Heart right ventricle (tissue), 16 donors: ENCODE measurements at regions of chr4 and their contacts with region 1.

Region 1: DNA sequence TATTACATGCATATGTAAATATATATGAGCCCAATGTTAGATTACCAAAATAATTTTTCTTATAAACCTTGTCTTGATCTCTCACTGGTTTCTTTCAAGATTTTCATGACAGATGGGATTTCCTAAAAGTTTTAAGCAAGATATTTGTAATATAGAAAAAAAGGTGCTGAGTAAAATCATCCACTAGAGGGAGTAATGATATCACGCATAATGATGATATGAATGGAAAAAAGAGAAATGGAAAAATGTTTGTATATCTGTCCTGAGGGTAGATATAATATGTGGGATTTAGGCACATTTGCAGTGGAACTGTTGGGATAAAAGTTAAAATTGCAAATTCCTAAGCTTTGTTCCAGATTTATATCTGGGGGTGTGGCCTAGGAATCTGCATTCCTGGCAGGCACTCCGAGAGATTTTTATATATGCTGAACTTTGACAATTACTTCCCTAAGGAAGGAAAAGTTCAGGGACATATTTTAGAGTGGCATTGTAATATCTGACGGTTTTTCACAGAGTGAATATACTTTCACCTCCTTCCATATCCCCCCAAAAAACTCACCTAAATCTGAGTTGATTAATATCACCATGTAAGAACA is 60.5 kb downstream of the TMA16 start:
- DNase-seq: no peak
- ATAC-seq: no peak
- H3K4me3 ChIP-seq: no peak overlapping the region
- H3K27ac ChIP-seq: no peak overlapping the region
- H3K4me1 ChIP-seq: peaks cover 0 to 50% (median 13%) of the 10 kb centered on the region in 9 donors
- H3K27me3 ChIP-seq: peaks cover 0 to 4% (median 0%) of the 10 kb centered on the region in 7 donors
- CTCF ChIP-seq: peak; percentile 23 to 80 (median 63)

Region 2: GRCh38 chr4:163415668-163416067 is 139.3 kb before region 1 on chr4:
- intact Hi-C with region 1: no loop called
- DNase-seq: no peak
- ATAC-seq: no peak
- H3K4me3 ChIP-seq: no peak overlapping the region
- H3K27ac ChIP-seq: no peak overlapping the region
- H3K4me1 ChIP-seq: no peaks in the 10 kb centered on the region
- H3K27me3 ChIP-seq: peaks cover 0 to 5% (median 0%) of the 10 kb centered on the region in 7 donors
- CTCF ChIP-seq: no peak

Region 3: DNA sequence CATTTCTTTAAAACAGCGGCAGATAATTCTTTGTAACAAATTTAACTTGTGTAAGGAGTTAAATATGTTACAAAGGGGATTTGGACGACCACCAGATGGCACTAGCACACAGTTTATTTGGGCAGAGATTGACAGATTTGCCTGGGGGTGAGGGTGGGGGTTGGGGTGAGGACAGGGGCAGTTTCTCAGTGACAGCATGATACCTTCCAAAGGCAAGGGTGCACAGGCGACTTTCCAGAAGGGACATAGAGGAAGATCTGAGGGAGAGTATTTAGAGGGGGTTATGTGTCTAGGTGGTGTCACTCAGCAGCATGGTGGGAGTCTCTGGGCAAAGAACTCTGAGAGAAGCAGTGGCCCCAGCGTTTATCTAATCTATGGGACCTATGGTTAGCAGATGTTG is 70.1 kb before region 1 on chr4:
- intact Hi-C with region 1: loop called in 2 of 10 experiments (anchors 2 kb)
- DNase-seq: peak in 1 of 2 donors; percentile 29
- ATAC-seq: peak in 1 of 8 donors; percentile 41
- H3K4me3 ChIP-seq: no peak overlapping the region
- H3K27ac ChIP-seq: no peak overlapping the region
- H3K4me1 ChIP-seq: peaks cover 0 to 13% (median 0%) of the 10 kb centered on the region in 9 donors
- H3K27me3 ChIP-seq: peaks cover 0 to 6% (median 0%) of the 10 kb centered on the region in 7 donors
- CTCF ChIP-seq: peak in 8 of 9 donors; percentile 31 to 68 (median 56)

Region 4: DNA sequence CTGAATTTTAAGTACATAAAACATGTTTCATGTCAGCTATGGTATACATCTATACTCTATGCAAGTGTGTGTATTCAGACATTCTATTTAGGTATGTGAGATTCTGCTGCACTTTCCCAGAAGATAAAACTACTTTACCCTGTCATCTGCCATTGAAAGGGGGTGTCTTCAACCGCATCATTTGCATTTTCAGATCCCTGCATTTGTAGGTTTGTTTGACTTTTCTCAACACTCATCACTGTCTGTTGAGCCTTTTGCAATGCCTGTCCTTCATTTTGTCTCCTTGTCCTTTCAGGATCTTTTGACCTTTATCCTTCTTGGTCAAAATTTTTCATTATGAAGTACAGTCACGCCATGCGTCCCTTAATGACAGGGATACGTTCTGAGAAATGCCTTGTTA is 43.1 kb after region 1 on chr4:
- intact Hi-C with region 1: no loop called
- DNase-seq: no peak
- ATAC-seq: no peak
- H3K4me3 ChIP-seq: no peak overlapping the region
- H3K27ac ChIP-seq: no peak overlapping the region
- H3K4me1 ChIP-seq: peaks cover 0 to 49% (median 0%) of the 10 kb centered on the region in 9 donors
- H3K27me3 ChIP-seq: no peaks in the 10 kb centered on the region
- CTCF ChIP-seq: no peak

Region 5: DNA sequence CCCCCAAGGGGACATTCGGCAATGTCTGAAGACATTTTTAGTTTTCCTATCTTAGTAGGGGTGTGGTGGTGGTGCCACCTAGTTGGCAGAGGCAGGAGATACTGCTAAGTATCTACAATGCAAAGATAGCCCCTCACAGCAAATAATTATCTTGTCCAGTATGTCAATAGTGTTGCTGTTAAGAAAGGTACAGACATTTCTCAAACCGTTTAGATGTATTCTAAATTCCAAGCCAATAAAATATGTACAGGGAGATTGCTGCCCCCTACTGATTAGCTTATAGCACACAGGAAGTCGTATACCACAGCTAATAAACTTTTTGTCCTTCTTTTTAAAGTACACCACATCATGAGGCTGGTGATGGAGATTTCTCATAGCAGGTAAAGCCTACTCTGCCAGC is 200.0 kb after region 1 on chr4:
- intact Hi-C with region 1: loop called in 1 of 10 experiments (anchors 10 kb)
- DNase-seq: no peak
- ATAC-seq: no peak
- H3K4me3 ChIP-seq: no peak overlapping the region
- H3K27ac ChIP-seq: no peak overlapping the region
- H3K4me1 ChIP-seq: no peaks in the 10 kb centered on the region
- H3K27me3 ChIP-seq: no peaks in the 10 kb centered on the region
- CTCF ChIP-seq: peak in 1 of 9 donors; percentile 28

Region 6: DNA sequence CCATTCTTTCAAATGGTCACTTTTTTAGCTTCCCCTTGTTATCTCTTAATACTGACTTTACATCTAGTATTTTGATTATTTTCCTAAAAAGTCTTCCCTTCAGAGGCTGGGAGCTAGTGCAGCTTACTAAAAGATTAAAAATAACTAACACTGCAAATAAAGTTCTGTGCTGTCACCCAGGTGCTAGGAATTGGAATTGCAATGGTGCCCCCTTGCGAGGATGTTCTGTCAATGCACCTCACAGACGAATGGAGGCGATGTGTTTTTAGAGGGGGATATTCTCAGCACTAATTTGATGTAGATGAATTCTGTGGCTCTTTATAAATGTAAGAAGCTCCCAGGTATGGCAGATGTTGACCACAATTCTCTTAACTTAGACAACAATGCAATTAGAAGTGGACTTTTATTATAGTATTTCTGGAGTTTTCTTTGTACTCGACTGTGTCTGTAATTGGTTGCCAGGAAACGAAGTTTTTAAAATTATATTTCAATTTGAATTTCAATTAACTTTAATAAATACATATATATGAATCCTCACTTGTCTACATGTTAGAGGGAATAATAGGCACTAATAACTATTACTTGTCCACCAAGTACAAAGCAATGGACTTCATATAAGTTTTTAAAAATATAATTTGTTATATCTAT is 1177.0 kb after region 1 on chr4:
- intact Hi-C with region 1: loop called (anchors 2 to 10 kb)
- DNase-seq: peak; percentile 11
- ATAC-seq: peak in 5 of 8 donors; percentile 47 to 66 (median 57)
- H3K4me3 ChIP-seq: no peak overlapping the region
- H3K27ac ChIP-seq: no peak overlapping the region
- H3K4me1 ChIP-seq: peaks cover 0 to 4% (median 0%) of the 10 kb centered on the region in 9 donors
- H3K27me3 ChIP-seq: peaks cover 0 to 5% (median 0%) of the 10 kb centered on the region in 7 donors
- CTCF ChIP-seq: peak; percentile 46 to 83 (median 74)